ENCODE measurements at regions of chr17 and their contacts with region 1.

Region 1: GRCh38 chr17:15409721-15410250 is 57.6 kb downstream of the CDRT4 start:
- DNase-seq: peak; percentile 95
- H3K4me3 ChIP-seq: peak overlapping the region in 1 of 3 experiments; percentile 3
- H3K27ac ChIP-seq: peak overlapping the region; percentile 66
- H3K4me1 ChIP-seq: peaks cover 28% of the 10 kb centered on the region
- H3K27me3 ChIP-seq: no peaks in the 10 kb centered on the region
- CTCF ChIP-seq: no peak

Region 2: DNA sequence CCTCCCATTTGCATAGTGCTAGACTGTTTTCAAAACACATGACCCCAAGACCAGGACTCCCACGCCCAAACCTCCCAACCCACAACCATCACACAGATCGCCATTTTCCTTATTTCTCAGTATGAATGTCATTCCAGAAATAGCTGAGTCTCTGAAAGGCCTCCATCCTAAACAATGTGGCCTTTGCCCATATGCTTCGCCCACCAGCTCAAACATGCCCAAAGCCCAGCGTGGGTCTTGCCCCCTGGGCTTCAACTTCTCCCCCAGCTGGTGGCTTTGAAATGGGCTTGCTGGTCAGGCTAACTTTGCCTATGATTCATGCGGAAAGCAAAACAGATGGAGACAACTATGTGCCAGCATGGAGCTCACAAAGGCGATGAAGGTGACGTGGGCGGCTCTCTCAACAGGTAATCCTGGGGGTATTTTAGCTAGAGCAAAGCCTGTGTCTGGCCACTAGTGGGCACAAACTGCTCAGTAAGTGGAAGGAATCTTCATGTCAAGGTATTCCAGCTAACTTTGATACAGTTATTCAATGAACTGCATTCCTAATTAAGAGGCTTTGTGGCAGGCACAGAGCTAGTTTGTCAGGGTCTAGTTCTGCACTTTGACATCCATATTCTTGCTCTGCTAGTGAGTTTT is 161.8 kb before region 1 on chr17:
- CTCF ChIA-PET with region 1: interaction called, 14 read pairs
- dilution Hi-C with region 1: no loop called
- in situ Hi-C with region 1: loop called in 1 of 2 experiments (anchors 25 kb)
- intact Hi-C with region 1: no loop called
- DNase-seq: peak; percentile 83
- H3K4me3 ChIP-seq: no peak overlapping the region
- H3K27ac ChIP-seq: peak overlapping the region; percentile 2
- H3K4me1 ChIP-seq: peaks cover 13% of the 10 kb centered on the region
- H3K27me3 ChIP-seq: no peaks in the 10 kb centered on the region
- CTCF ChIP-seq: peak; percentile 74 to 95

Region 3: DNA sequence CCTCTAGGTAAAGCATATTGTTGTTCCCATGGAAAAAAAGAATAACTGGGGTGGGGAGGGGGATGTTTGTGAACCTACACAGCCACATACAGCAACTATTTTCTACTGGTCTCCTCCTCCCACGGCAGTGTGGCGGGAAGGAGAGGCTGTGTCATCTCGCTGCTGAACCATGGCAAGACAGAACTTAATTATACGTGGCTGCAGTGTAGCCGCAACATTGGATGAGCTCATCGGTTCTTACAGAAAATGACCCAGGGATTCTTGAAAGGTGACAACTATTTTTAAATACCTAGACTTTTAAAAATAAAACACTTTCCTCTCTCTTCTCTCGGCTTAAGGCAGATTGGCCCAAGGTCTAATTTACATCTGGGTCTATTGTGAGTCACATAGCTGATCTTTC is 48.6 kb before region 1 on chr17:
- CTCF ChIA-PET with region 1: no interaction called
- dilution Hi-C with region 1: no loop called
- in situ Hi-C with region 1: no loop called
- intact Hi-C with region 1: no loop called
- DNase-seq: no peak
- H3K4me3 ChIP-seq: no peak overlapping the region
- H3K27ac ChIP-seq: no peak overlapping the region
- H3K4me1 ChIP-seq: no peaks in the 10 kb centered on the region
- H3K27me3 ChIP-seq: no peaks in the 10 kb centered on the region
- CTCF ChIP-seq: no peak

Region 4: GRCh38 chr17:15475631-15476354 is 66.0 kb after region 1 on chr17:
- CTCF ChIA-PET with region 1: no interaction called
- dilution Hi-C with region 1: no loop called
- in situ Hi-C with region 1: no loop called
- intact Hi-C with region 1: no loop called
- DNase-seq: peak; percentile 9
- H3K4me3 ChIP-seq: no peak overlapping the region
- H3K27ac ChIP-seq: no peak overlapping the region
- H3K4me1 ChIP-seq: peaks cover 6% of the 10 kb centered on the region
- H3K27me3 ChIP-seq: no peaks in the 10 kb centered on the region
- CTCF ChIP-seq: no peak

Region 5: DNA sequence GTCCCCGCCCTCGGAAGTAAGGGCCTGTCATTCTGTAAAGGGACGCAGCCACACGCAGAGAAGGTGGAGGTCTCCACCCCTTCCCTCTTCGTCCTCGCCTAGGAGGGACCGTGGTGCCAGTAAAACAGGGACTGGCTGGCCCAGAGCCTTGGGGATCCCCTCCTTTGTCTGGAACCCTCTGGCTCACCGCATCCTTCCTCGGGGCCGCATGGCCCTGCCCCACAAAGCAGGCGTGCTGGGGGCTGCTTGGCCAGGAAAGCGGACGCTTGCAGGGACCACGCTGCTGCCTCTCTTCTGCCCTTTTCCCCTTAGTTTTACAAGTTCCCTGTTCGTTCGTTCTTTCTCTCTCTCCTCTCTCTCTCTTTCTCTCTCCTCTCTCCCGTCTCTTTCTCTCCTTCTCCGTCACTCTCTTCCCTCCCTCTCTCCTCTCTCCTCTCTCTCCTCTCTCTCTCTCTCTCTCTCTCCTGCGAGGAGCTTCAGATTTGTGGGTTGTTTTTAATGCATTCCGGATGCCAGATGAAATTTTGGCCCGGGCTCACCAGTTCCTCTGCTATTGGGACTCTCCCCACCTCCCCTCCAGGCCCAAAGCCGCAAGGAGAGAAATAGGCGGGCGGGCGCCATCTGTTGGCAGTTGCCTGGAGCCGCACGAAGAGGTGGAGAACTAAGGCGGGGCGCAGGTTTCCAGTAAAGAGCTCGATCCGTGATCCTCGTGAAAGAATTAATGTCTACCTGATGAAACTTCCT is 92.8 kb after region 1 on chr17:
- CTCF ChIA-PET with region 1: no interaction called
- dilution Hi-C with region 1: no loop called
- in situ Hi-C with region 1: no loop called
- intact Hi-C with region 1: loop called (anchors 2 kb)
- DNase-seq: peak; percentile 66
- H3K4me3 ChIP-seq: no peak overlapping the region
- H3K27ac ChIP-seq: no peak overlapping the region
- H3K4me1 ChIP-seq: peaks cover 6% of the 10 kb centered on the region
- H3K27me3 ChIP-seq: no peaks in the 10 kb centered on the region
- CTCF ChIP-seq: peak; percentile 86 to 91